ENCODE measurements at regions of chr3 and their contacts with region 1.

Region 1: GRCh38 chr3:21779909-21780308 is 28.9 kb upstream of the ZNF385D start:
- DNase-seq: no peak
- H3K4me3 ChIP-seq: no peak overlapping the region
- H3K27ac ChIP-seq: peak overlapping the region; percentile 75 to 84
- H3K4me1 ChIP-seq: peaks cover 0 to 53% of the 10 kb centered on the region in 2 donors
- H3K27me3 ChIP-seq: no peaks in the 10 kb centered on the region
- CTCF ChIP-seq: no peak

Region 2: DNA sequence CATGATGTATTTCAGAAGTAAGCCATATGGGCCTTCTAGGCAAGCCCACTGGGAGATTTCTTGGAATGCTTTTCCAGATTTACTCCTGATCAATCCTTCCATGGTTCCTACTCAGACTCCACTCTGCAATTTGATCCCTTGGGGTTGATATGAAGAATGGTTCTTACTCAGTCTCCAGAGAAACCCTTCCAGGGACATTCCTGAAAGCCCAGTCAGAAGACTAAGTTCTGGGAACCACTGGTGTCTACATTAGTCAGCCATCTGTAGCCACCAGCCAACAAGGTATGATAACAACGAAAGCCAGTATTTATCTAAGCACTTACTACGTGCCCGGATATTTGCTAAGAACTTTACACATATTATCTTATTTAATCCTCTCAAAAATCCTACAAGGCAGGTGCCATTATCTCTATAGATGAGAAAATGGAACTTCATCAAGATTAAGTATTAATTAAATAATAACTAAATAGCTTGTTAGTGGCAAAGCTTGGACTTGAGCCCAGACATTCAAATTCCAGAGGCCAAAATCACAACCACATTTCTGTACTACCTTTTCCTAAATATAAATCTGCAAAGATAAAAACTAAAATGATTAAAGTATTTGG is 61.6 kb before region 1 on chr3:
- intact Hi-C with region 1: loop called (anchors 10 kb)
- DNase-seq: peak in 1 of 2 donors; percentile 83
- H3K4me3 ChIP-seq: no peak overlapping the region
- H3K27ac ChIP-seq: peak overlapping the region; percentile 80 to 85
- H3K4me1 ChIP-seq: peaks cover 8 to 35% of the 10 kb centered on the region in 2 donors
- H3K27me3 ChIP-seq: no peaks in the 10 kb centered on the region
- CTCF ChIP-seq: no peak

Region 3: DNA sequence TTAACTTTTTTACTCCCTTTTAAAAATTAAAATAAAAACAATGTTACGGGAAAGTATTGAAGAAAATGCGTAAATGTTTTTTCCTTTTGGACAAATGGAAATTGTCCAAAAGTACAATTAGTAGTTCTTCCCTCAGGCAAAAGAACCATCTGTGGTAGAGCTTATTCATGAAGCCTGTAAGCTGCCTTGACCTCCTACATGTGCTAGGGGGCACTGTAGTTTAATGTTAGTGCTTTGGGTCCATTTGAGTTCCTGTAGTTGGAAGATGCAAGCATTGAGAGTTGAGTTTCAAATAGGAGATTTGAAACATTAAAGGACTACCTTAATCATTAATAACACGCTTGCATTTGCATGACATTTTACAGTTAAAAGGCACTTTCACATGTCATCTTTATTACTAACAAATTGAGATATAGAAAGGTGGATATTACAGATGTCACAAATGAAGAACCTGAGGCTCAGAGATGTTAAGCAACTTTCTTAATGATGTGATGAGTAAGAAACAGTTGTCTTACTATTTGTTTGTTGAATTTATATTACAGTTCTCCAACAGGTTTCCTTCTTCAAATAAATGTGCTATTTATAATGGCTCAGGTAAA is 27.1 kb before region 1 on chr3:
- intact Hi-C with region 1: no loop called
- DNase-seq: no peak
- H3K4me3 ChIP-seq: no peak overlapping the region
- H3K27ac ChIP-seq: no peak overlapping the region
- H3K4me1 ChIP-seq: peaks cover 0 to 4% of the 10 kb centered on the region in 2 donors
- H3K27me3 ChIP-seq: no peaks in the 10 kb centered on the region
- CTCF ChIP-seq: peak; percentile 59 to 71 (median 71)

Region 4: DNA sequence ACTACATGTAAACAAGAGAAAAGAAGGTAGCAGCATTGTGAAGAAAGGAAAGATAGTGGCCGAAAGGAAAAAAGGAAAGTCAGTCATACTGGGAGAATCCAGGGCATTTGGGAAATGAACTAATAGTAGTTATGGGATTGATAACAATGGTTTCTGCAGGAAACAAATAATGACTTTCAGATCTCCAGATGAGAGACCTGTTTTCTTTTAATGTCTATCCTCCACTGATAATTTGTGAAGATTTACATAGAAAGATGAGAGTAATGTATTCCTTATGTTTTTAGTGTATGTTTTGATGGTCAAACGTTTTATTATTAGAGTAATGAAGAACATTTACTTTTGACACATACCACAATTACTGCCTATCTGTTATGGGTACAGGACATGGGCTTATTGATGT is 13.9 kb before region 1 on chr3:
- intact Hi-C with region 1: loop called (anchors 1 kb)
- DNase-seq: no peak
- H3K4me3 ChIP-seq: no peak overlapping the region
- H3K27ac ChIP-seq: no peak overlapping the region
- H3K4me1 ChIP-seq: no peaks in the 10 kb centered on the region
- H3K27me3 ChIP-seq: no peaks in the 10 kb centered on the region
- CTCF ChIP-seq: no peak

Measured in ascending aorta (tissue), 2 donors.